OCI-LY7 (cell line): ENCODE measurements at regions of chr11 and their contacts with region 1.

Region 1: DNA sequence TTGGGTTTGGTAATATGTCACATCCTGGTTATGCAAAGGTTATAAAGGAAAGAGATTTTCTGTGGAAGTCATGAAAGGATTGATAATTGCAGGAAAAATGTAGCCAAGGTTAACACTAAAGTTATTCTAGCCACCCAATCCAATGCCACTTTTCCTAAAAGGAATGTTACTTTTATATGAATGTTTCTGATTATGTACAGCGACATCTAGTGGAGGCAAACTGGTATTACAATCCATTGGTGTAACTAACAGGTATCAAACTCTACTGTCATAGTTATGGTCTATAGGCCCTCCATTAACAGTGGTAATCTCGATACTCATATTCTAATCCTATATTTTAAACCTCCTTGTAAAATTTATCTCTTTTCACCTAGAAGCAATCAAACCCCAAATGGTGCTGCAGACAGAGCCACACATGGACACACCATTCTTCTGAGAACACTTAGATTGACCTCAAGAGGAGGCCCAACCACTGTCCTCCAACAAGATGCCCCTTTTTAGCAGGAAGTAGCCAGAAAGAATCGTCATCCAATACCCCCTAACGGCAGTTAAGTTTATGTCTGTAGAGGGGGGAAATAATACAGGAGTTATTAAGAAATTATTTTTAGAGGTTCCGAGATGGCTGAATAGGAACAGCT is 74.9 kb upstream of the RAG2 start:
- DNase-seq: peak; percentile 47
- H3K4me3 ChIP-seq: no peak overlapping the region
- H3K27ac ChIP-seq: no peak overlapping the region
- H3K4me1 ChIP-seq: no peaks in the 10 kb centered on the region
- CTCF ChIP-seq: peak; percentile 95

Region 2: DNA sequence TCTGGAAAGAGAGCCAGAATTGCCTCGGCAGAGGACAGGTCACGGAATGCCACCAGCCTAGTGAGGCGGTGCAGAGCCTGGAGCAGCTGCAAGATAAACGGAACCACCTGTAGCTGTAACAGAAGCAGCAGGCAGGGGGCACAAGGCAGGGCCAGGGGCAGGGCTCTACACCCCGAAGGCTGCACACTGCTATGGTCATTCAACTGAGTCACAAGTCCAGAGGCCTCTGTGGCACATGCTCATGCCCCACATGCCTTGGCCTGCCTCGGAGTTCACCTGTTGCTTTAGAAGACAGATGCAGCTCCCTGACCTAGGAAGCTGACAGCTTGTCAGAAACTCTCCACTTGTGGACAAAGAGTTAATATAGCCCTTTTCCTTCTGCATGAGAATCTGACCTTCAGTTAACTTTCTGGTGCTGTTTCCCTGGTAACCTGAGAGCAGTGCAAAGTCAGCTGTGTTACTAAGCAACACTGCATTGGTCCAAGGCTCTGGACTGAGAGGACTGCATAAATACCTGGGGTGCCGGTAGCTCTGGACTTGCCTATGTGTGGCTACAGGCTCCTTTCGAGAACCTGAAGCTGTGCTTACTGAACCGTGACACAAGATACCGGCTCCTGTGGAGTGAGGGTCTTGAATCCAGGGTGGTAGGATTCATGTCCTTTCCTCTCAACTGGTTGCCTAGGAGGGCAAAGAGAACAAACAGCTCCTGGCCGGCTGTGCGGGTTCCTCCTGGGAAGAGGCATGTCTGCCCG is 394.2 kb before region 1 on chr11:
- CTCF ChIA-PET with region 1: no interaction called
- POLR2A ChIA-PET with region 1: no interaction called
- intact Hi-C with region 1: no loop called
- DNase-seq: no peak
- H3K4me3 ChIP-seq: no peak overlapping the region
- H3K27ac ChIP-seq: no peak overlapping the region
- H3K4me1 ChIP-seq: no peaks in the 10 kb centered on the region
- CTCF ChIP-seq: no peak

Region 3: GRCh38 chr11:36431429-36432092 is 241.4 kb before region 1 on chr11:
- CTCF ChIA-PET with region 1: no interaction called
- POLR2A ChIA-PET with region 1: no interaction called
- intact Hi-C with region 1: no loop called
- DNase-seq: no peak
- H3K4me3 ChIP-seq: no peak overlapping the region
- H3K27ac ChIP-seq: no peak overlapping the region
- H3K4me1 ChIP-seq: no peaks in the 10 kb centered on the region
- CTCF ChIP-seq: no peak

Region 4: GRCh38 chr11:36564376-36565030 is 108.4 kb before region 1 on chr11:
- CTCF ChIA-PET with region 1: no interaction called
- POLR2A ChIA-PET with region 1: no interaction called
- intact Hi-C with region 1: loop called (anchors 5 kb)
- DNase-seq: peak; percentile 50
- H3K4me3 ChIP-seq: no peak overlapping the region
- H3K27ac ChIP-seq: no peak overlapping the region
- H3K4me1 ChIP-seq: no peaks in the 10 kb centered on the region
- CTCF ChIP-seq: peak; percentile 79

Region 5: GRCh38 chr11:36622431-36623136 is 50.3 kb before region 1 on chr11:
- CTCF ChIA-PET with region 1: no interaction called
- POLR2A ChIA-PET with region 1: no interaction called
- intact Hi-C with region 1: loop called (anchors 10 kb)
- DNase-seq: peak; percentile 14
- H3K4me3 ChIP-seq: no peak overlapping the region
- H3K27ac ChIP-seq: no peak overlapping the region
- H3K4me1 ChIP-seq: no peaks in the 10 kb centered on the region
- CTCF ChIP-seq: peak; percentile 63

Region 6: GRCh38 chr11:36899800-36900199 is 226.9 kb after region 1 on chr11:
- CTCF ChIA-PET with region 1: no interaction called
- POLR2A ChIA-PET with region 1: no interaction called
- intact Hi-C with region 1: no loop called
- DNase-seq: no peak
- H3K4me3 ChIP-seq: no peak overlapping the region
- H3K27ac ChIP-seq: no peak overlapping the region
- H3K4me1 ChIP-seq: no peaks in the 10 kb centered on the region
- CTCF ChIP-seq: no peak